CD14-positive monocyte (primary cell): ENCODE measurements at regions of chr15 and their contacts with region 1.

Region 1: GRCh38 chr15:33111041-33111451 is 83.5 kb downstream of the FMN1 start:
- DNase-seq: no peak
- H3K4me3 ChIP-seq: no peak overlapping the region
- H3K4me3 Mint-ChIP-seq: no peak overlapping the region
- H3K27ac ChIP-seq: no peak overlapping the region
- H3K27ac Mint-ChIP-seq: no peak overlapping the region
- H3K4me1 ChIP-seq: peaks cover 10 to 12% of the 10 kb centered on the region in 2 donors
- H3K4me1 Mint-ChIP-seq: peaks cover 5% of the 10 kb centered on the region
- H3K27me3 ChIP-seq: no peaks in the 10 kb centered on the region
- H3K27me3 Mint-ChIP-seq: peaks cover 1 to 4% (median 3%) of the 10 kb centered on the region in 3 donors
- CTCF ChIP-seq: no peak

Region 2: DNA sequence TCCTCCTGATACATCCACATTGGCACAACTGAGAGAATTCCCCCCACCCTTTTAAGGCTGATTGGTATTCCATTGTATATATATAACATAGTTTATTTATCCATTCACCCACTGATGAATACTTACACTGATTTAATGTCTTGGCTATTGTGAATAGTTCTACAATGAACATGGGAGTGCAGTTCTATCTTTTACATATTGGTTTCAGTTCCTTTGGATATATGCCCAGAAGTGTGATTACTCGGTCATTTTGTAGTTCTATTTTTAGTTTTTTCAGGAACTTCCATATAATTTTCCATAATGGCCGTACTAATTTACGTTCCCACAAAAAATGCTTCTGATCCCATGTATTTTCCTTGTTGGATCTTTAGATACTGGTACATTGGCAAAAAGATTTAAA is 51.9 kb before region 1 on chr15:
- intact Hi-C with region 1: loop called in 1 of 2 experiments (anchors 10 kb)
- DNase-seq: no peak
- H3K4me3 ChIP-seq: no peak overlapping the region
- H3K4me3 Mint-ChIP-seq: no peak overlapping the region
- H3K27ac ChIP-seq: no peak overlapping the region
- H3K27ac Mint-ChIP-seq: no peak overlapping the region
- H3K4me1 ChIP-seq: no peaks in the 10 kb centered on the region
- H3K4me1 Mint-ChIP-seq: peaks cover 4% of the 10 kb centered on the region
- H3K27me3 ChIP-seq: no peaks in the 10 kb centered on the region
- H3K27me3 Mint-ChIP-seq: peaks cover 0 to 3% (median 1%) of the 10 kb centered on the region in 3 donors
- CTCF ChIP-seq: no peak

Region 3: DNA sequence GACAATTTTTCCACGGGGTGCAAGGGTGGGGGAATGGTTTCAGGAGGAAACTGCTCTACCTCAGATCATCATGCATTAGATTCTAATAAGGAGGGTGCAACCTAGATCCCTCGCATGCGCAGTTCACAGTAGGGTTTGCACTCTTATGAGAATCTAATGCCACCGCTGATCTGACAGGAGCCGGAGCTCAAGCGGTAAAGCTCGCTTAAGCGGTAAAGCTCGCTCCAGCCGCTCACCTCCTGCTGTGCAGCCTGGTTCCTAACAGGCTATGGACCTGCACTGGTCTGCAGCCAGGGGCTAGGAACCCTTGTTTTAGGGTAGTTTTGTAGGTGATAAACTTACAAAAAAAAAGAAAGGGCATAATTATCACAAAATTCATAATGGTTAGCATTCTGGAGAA is 145.8 kb after region 1 on chr15:
- intact Hi-C with region 1: no loop called
- DNase-seq: no peak
- H3K4me3 ChIP-seq: no peak overlapping the region
- H3K4me3 Mint-ChIP-seq: no peak overlapping the region
- H3K27ac ChIP-seq: no peak overlapping the region
- H3K27ac Mint-ChIP-seq: no peak overlapping the region
- H3K4me1 ChIP-seq: no peaks in the 10 kb centered on the region
- H3K4me1 Mint-ChIP-seq: no peaks in the 10 kb centered on the region
- H3K27me3 ChIP-seq: peaks cover 5 to 8% of the 10 kb centered on the region in 2 donors
- H3K27me3 Mint-ChIP-seq: peaks cover 6 to 22% (median 7%) of the 10 kb centered on the region in 3 donors
- CTCF ChIP-seq: no peak

Region 4: GRCh38 chr15:33380406-33380805 is 269.4 kb after region 1 on chr15:
- intact Hi-C with region 1: no loop called
- DNase-seq: no peak
- H3K4me3 ChIP-seq: no peak overlapping the region
- H3K4me3 Mint-ChIP-seq: no peak overlapping the region
- H3K27ac ChIP-seq: no peak overlapping the region
- H3K27ac Mint-ChIP-seq: no peak overlapping the region
- H3K4me1 ChIP-seq: no peaks in the 10 kb centered on the region
- H3K4me1 Mint-ChIP-seq: no peaks in the 10 kb centered on the region
- H3K27me3 ChIP-seq: no peaks in the 10 kb centered on the region
- H3K27me3 Mint-ChIP-seq: peaks cover 0 to 5% (median 5%) of the 10 kb centered on the region in 3 donors
- CTCF ChIP-seq: no peak